Activated CD8-positive, alpha-beta T cell treated with anti-CD3 and anti-CD28 coated beads for 36 hours (primary cell): ENCODE measurements at regions of chr19 and their contacts with region 1.

Region 1: GRCh38 chr19:41795031-41795461 is 1.3 kb upstream of the CEACAM3 start:
- DNase-seq: peak; percentile 82
- ATAC-seq: peak; percentile 96
- H3K4me3 Mint-ChIP-seq: no peak overlapping the region
- H3K27ac Mint-ChIP-seq: no peak overlapping the region
- H3K4me1 Mint-ChIP-seq: no peaks in the 10 kb centered on the region
- H3K27me3 Mint-ChIP-seq: peaks cover 27% of the 10 kb centered on the region
- CTCF ChIP-seq: peak; percentile 86

Region 2: DNA sequence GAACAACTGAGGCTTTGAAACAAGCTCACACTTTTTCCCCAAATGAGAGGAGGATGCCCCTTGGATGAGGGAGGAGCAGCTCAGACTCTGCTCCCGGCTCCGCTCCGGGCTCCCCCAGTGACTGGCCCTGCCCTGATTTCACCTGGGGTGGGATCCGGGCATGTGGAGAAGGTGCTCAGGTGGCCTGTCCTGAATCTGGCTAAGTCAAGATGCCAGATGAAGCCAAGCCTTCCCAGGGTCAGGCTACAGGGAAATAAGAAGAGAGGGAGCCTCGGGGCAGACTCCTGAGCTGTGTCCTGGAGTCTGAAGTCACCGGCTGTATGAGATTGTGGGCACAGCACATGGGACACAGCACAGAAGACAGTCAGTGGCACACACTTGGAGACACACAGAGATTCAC is 76.3 kb before region 1 on chr19:
- CTCF ChIA-PET with region 1: no interaction called
- POLR2A ChIA-PET with region 1: no interaction called
- intact Hi-C with region 1: no loop called
- DNase-seq: no peak
- ATAC-seq: no peak
- H3K4me3 Mint-ChIP-seq: no peak overlapping the region
- H3K27ac Mint-ChIP-seq: no peak overlapping the region
- H3K4me1 Mint-ChIP-seq: no peaks in the 10 kb centered on the region
- H3K27me3 Mint-ChIP-seq: peaks cover 41% of the 10 kb centered on the region
- CTCF ChIP-seq: no peak

Region 3: GRCh38 chr19:41746593-41747227 is 48.3 kb before region 1 on chr19:
- CTCF ChIA-PET with region 1: interaction called, 98 read pairs
- POLR2A ChIA-PET with region 1: no interaction called
- intact Hi-C with region 1: no loop called
- DNase-seq: peak; percentile 74
- ATAC-seq: peak; percentile 85
- H3K4me3 Mint-ChIP-seq: no peak overlapping the region
- H3K27ac Mint-ChIP-seq: no peak overlapping the region
- H3K4me1 Mint-ChIP-seq: peaks cover 11% of the 10 kb centered on the region
- H3K27me3 Mint-ChIP-seq: peaks cover 51% of the 10 kb centered on the region
- CTCF ChIP-seq: peak; percentile 74

Region 4: GRCh38 chr19:41775360-41775695 is 19.7 kb before region 1 on chr19:
- CTCF ChIA-PET with region 1: interaction called, 28 read pairs
- POLR2A ChIA-PET with region 1: interaction called, 3 read pairs
- intact Hi-C with region 1: no loop called
- DNase-seq: no peak
- ATAC-seq: no peak
- H3K4me3 Mint-ChIP-seq: no peak overlapping the region
- H3K27ac Mint-ChIP-seq: no peak overlapping the region
- H3K4me1 Mint-ChIP-seq: peaks cover 30% of the 10 kb centered on the region
- H3K27me3 Mint-ChIP-seq: peaks cover 66% of the 10 kb centered on the region
- CTCF ChIP-seq: no peak

Region 5: GRCh38 chr19:41821003-41821735 is 26.1 kb after region 1 on chr19:
- CTCF ChIA-PET with region 1: interaction called, 262 read pairs
- POLR2A ChIA-PET with region 1: no interaction called
- intact Hi-C with region 1: loop called (anchors 1 kb)
- DNase-seq: peak; percentile 63
- ATAC-seq: peak; percentile 93
- H3K4me3 Mint-ChIP-seq: no peak overlapping the region
- H3K27ac Mint-ChIP-seq: no peak overlapping the region
- H3K4me1 Mint-ChIP-seq: no peaks in the 10 kb centered on the region
- H3K27me3 Mint-ChIP-seq: peaks cover 12% of the 10 kb centered on the region
- CTCF ChIP-seq: peak; percentile 93

Region 6: GRCh38 chr19:41837981-41838708 is 43.1 kb after region 1 on chr19:
- CTCF ChIA-PET with region 1: interaction called, 97 read pairs
- POLR2A ChIA-PET with region 1: no interaction called
- intact Hi-C with region 1: no loop called
- DNase-seq: no peak
- ATAC-seq: no peak
- H3K4me3 Mint-ChIP-seq: no peak overlapping the region
- H3K27ac Mint-ChIP-seq: no peak overlapping the region
- H3K4me1 Mint-ChIP-seq: no peaks in the 10 kb centered on the region
- H3K27me3 Mint-ChIP-seq: peaks cover 20% of the 10 kb centered on the region
- CTCF ChIP-seq: no peak

Region 7: GRCh38 chr19:41853344-41854167 is 58.5 kb after region 1 on chr19:
- CTCF ChIA-PET with region 1: interaction called, 10 read pairs
- POLR2A ChIA-PET with region 1: no interaction called
- intact Hi-C with region 1: no loop called
- DNase-seq: no peak
- ATAC-seq: no peak
- H3K4me3 Mint-ChIP-seq: no peak overlapping the region
- H3K27ac Mint-ChIP-seq: no peak overlapping the region
- H3K4me1 Mint-ChIP-seq: no peaks in the 10 kb centered on the region
- H3K27me3 Mint-ChIP-seq: no peaks in the 10 kb centered on the region
- CTCF ChIP-seq: no peak

Region 8: DNA sequence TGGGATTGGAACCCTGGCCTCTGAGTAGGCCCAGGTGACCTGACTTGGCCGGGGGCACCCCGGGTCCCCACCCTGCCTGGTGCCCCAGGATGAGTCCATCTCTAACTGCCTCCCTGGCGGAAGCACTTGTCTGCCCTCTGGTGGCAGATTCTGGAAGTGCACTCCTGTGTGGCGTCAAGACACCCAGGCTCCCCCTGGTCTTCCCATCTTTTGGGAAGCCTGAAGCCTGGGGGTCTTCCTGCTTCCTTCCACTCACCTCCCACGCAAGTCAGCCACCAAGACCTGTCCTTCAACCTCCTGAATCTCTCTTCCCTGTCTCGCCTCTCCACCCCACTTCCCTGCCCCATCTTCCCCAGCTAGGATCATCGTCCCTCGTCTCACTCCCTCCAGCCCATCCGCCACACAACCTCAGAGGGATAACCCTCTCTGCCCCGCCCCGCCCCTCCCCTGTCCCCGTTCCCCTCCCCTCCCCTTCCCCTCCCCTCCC is 156.7 kb after region 1 on chr19:
- CTCF ChIA-PET with region 1: interaction called, 11 read pairs
- POLR2A ChIA-PET with region 1: no interaction called
- intact Hi-C with region 1: no loop called
- DNase-seq: peak; percentile 94
- ATAC-seq: peak; percentile 96
- H3K4me3 Mint-ChIP-seq: no peak overlapping the region
- H3K27ac Mint-ChIP-seq: peak overlapping the region; percentile 58
- H3K4me1 Mint-ChIP-seq: peaks cover 28% of the 10 kb centered on the region
- H3K27me3 Mint-ChIP-seq: no peaks in the 10 kb centered on the region
- CTCF ChIP-seq: peak; percentile 100